ENCODE measurements at regions of chr13 and their contacts with region 1.

Region 1: DNA sequence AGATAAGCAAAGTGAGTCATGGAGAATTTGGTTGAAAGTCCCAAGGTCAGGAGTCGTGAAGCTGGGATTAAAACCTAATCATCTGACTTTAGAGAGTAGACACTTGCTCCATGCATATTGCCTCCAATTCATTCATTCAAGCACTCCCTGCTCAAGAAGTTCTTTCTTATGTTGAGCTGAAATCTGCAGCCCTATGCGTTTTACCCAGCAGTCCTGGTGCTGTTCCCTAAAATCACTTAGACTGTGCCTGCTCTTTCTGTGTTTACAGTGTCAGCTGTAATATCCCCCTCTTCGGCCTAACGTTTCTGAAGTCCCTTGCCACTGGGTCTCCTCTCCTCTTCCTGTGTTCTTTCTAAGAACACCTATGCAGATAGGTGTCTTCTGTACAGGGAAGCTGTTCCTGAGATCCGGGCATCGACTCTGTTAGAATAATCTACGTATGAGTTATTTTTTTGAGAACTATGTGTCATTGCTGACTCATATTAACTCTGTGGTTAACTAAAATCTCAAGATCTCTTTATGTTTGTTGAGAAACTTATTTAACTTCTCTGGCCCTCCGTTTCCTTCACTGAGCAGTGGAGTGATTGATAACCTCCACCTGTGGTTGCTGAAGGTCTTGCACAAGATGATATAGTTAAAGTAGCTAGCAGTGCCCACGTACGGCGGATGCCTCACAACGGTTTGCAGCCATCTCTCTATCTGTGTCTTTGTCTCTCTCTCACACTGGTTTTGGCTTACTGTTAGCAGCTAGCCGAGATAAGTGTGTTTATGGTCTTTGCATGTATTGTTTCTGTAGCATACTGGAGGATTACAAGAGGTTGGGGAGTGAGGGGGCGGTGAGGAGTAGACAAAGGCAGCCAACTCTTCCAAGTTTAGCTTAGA is 4.7 kb downstream of the ALOX5AP start:
- DNase-seq: no peak
- H3K4me3 ChIP-seq: no peak overlapping the region
- H3K27ac ChIP-seq: peak overlapping the region; percentile 11 to 27
- H3K4me1 ChIP-seq: no peaks in the 10 kb centered on the region
- H3K27me3 ChIP-seq: no peaks in the 10 kb centered on the region
- CTCF ChIP-seq: peak in 1 of 4 experiments; percentile 9
- POLR2A ChIP-seq: no peak

Region 2: DNA sequence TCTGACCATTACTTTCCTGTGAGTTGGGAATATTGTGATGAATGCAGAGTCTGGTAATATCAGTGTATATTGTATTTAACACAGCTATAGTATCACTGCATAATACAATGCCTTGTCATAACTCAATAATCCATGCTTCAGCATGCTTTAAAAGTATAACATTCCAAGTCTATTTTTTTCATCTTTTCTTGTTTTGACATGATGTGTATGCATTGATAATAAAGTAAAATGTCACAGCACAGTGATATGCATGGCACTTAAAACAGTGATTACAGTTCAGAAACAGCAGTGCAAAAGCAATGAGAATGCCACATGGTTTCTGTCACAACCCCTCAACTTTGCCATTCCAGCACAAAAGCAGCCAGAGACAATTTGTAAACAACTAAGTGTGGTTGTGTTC is 450.5 kb before region 1 on chr13:
- intact Hi-C with region 1: no loop called
- DNase-seq: no peak
- H3K4me3 ChIP-seq: no peak overlapping the region
- H3K27ac ChIP-seq: no peak overlapping the region
- H3K4me1 ChIP-seq: no peaks in the 10 kb centered on the region
- H3K27me3 ChIP-seq: no peaks in the 10 kb centered on the region
- CTCF ChIP-seq: no peak
- POLR2A ChIP-seq: no peak

Region 3: GRCh38 chr13:30679483-30680330 is 60.3 kb before region 1 on chr13:
- intact Hi-C with region 1: loop called (anchors 5 kb)
- DNase-seq: no peak
- H3K4me3 ChIP-seq: no peak overlapping the region
- H3K27ac ChIP-seq: no peak overlapping the region
- H3K4me1 ChIP-seq: no peaks in the 10 kb centered on the region
- H3K27me3 ChIP-seq: no peaks in the 10 kb centered on the region
- CTCF ChIP-seq: peak in 3 of 4 experiments; percentile 9 to 57 (median 52)
- POLR2A ChIP-seq: no peak

Region 4: DNA sequence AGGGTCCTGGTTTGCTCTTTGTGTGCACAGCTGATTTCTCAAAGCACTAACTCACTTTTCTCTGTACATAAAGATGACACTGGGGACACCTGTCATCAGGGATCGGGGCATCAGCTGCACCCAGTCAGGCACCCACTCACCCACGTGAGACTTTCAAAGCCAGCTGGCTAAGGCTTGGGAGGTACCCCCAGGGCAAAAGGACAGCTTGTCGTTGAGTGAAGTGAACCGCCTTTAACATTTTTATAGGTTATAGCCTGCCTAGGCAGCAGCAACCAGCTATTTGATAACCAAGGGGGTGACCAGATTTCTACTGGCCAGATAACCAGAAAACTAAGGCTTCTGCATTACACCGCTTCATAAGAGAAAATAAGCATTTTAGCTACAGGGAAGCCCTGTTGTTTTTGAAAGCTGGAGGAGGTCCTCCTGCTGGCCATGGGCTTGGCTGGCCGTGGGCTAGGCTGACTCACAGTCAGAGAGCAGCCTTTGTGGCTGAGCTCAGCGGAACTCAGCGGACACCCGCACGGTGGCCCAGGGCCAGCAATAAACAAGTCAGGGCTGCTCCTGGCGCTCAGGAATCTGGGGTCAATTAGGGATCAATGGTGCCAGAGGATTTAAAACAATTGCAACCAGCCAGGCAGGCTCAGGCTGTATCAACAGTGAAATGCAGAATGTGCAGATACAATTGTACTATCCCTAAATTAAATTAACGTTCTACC is 52.4 kb after region 1 on chr13:
- intact Hi-C with region 1: loop called (anchors 10 kb)
- DNase-seq: peak; percentile 82
- H3K4me3 ChIP-seq: no peak overlapping the region
- H3K27ac ChIP-seq: peak overlapping the region; percentile 59 to 69
- H3K4me1 ChIP-seq: peaks cover 9% of the 10 kb centered on the region
- H3K27me3 ChIP-seq: no peaks in the 10 kb centered on the region
- CTCF ChIP-seq: peak in 2 of 4 experiments; percentile 43 to 48
- POLR2A ChIP-seq: no peak

Region 5: GRCh38 chr13:30806784-30807183 is 66.8 kb after region 1 on chr13:
- intact Hi-C with region 1: no loop called
- DNase-seq: no peak
- H3K4me3 ChIP-seq: no peak overlapping the region
- H3K27ac ChIP-seq: no peak overlapping the region
- H3K4me1 ChIP-seq: no peaks in the 10 kb centered on the region
- H3K27me3 ChIP-seq: no peaks in the 10 kb centered on the region
- CTCF ChIP-seq: no peak
- POLR2A ChIP-seq: no peak

Measured in prostate gland (tissue), 2 donors.